PC-3 (cell line): ENCODE measurements at regions of chr5 and their contacts with region 1.

Region 1: GRCh38 chr5:23208959-23209431 is 298.4 kb upstream of the PRDM9 start:
- DNase-seq: peak; percentile 91
- ATAC-seq: peak; percentile 96
- H3K4me3 ChIP-seq: no peak overlapping the region
- H3K27ac ChIP-seq: no peak overlapping the region
- H3K4me1 ChIP-seq: no peaks in the 10 kb centered on the region
- H3K27me3 ChIP-seq: no peaks in the 10 kb centered on the region
- CTCF ChIP-seq: peak; percentile 91

Region 2: DNA sequence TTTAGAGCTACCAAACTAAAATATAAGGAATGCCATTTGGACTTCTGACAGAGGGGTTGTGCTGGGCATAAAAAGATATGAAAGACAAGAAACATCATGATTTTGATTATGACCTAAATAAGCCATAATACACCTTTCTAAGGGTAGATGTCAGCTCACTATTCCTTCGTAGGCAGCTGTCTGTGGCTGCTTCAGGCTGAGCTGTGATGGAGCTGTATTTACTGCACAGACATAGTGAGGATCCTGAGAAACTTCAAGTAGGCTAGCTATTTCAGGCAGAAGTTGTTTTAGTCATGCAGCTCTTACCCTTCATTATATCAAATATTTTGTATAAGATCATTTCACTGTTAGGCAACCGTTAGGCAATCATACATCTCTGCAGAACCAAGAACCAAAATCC is 867.6 kb before region 1 on chr5:
- CTCF ChIA-PET with region 1: no interaction called
- POLR2A ChIA-PET with region 1: no interaction called
- intact Hi-C with region 1: no loop called
- DNase-seq: no peak
- ATAC-seq: no peak
- H3K4me3 ChIP-seq: no peak overlapping the region
- H3K27ac ChIP-seq: no peak overlapping the region
- H3K4me1 ChIP-seq: no peaks in the 10 kb centered on the region
- H3K27me3 ChIP-seq: no peaks in the 10 kb centered on the region
- CTCF ChIP-seq: no peak

Region 3: GRCh38 chr5:22889718-22890117 is 319.3 kb before region 1 on chr5:
- CTCF ChIA-PET with region 1: no interaction called
- POLR2A ChIA-PET with region 1: no interaction called
- intact Hi-C with region 1: loop called (anchors 1 kb)
- DNase-seq: peak; percentile 36
- ATAC-seq: no peak
- H3K4me3 ChIP-seq: no peak overlapping the region
- H3K27ac ChIP-seq: no peak overlapping the region
- H3K4me1 ChIP-seq: no peaks in the 10 kb centered on the region
- H3K27me3 ChIP-seq: no peaks in the 10 kb centered on the region
- CTCF ChIP-seq: peak; percentile 61

Region 4: GRCh38 chr5:22928821-22929482 is 280.0 kb before region 1 on chr5:
- CTCF ChIA-PET with region 1: no interaction called
- POLR2A ChIA-PET with region 1: no interaction called
- intact Hi-C with region 1: no loop called
- DNase-seq: no peak
- ATAC-seq: no peak
- H3K4me3 ChIP-seq: no peak overlapping the region
- H3K27ac ChIP-seq: no peak overlapping the region
- H3K4me1 ChIP-seq: no peaks in the 10 kb centered on the region
- H3K27me3 ChIP-seq: no peaks in the 10 kb centered on the region
- CTCF ChIP-seq: no peak

Region 5: GRCh38 chr5:23332650-23333251 is 123.8 kb after region 1 on chr5:
- CTCF ChIA-PET with region 1: interaction called, 7 read pairs
- POLR2A ChIA-PET with region 1: no interaction called
- intact Hi-C with region 1: loop called (anchors 1 kb)
- DNase-seq: peak; percentile 72
- ATAC-seq: peak; percentile 64
- H3K4me3 ChIP-seq: no peak overlapping the region
- H3K27ac ChIP-seq: no peak overlapping the region
- H3K4me1 ChIP-seq: peaks cover 9% of the 10 kb centered on the region
- H3K27me3 ChIP-seq: no peaks in the 10 kb centered on the region
- CTCF ChIP-seq: peak; percentile 83

Region 6: GRCh38 chr5:23352437-23352836 is 143.4 kb after region 1 on chr5:
- CTCF ChIA-PET with region 1: no interaction called
- POLR2A ChIA-PET with region 1: no interaction called
- intact Hi-C with region 1: loop called (anchors 1 kb)
- DNase-seq: peak; percentile 81
- ATAC-seq: peak; percentile 93
- H3K4me3 ChIP-seq: no peak overlapping the region
- H3K27ac ChIP-seq: no peak overlapping the region
- H3K4me1 ChIP-seq: no peaks in the 10 kb centered on the region
- H3K27me3 ChIP-seq: no peaks in the 10 kb centered on the region
- CTCF ChIP-seq: peak; percentile 72

Region 7: GRCh38 chr5:23405316-23406068 is 196.5 kb after region 1 on chr5:
- CTCF ChIA-PET with region 1: interaction called, 4 read pairs
- POLR2A ChIA-PET with region 1: no interaction called
- intact Hi-C with region 1: loop called (anchors 1 kb)
- DNase-seq: peak; percentile 44
- ATAC-seq: no peak
- H3K4me3 ChIP-seq: no peak overlapping the region
- H3K27ac ChIP-seq: no peak overlapping the region
- H3K4me1 ChIP-seq: peaks cover 8% of the 10 kb centered on the region
- H3K27me3 ChIP-seq: no peaks in the 10 kb centered on the region
- CTCF ChIP-seq: peak; percentile 63

Region 8: GRCh38 chr5:23507278-23507685 is 298.3 kb after region 1 on chr5 and contains the start of gene PRDM9:
- CTCF ChIA-PET with region 1: no interaction called
- POLR2A ChIA-PET with region 1: no interaction called
- intact Hi-C with region 1: loop called (anchors 1 kb)
- DNase-seq: peak; percentile 98
- ATAC-seq: peak; percentile 93
- H3K4me3 ChIP-seq: peak within 1 kb of the TSS; percentile 70
- H3K27ac ChIP-seq: peak within 1 kb of the TSS; percentile 75
- H3K4me1 ChIP-seq: peaks cover 7% of the 10 kb centered on the region; the same call in 1 of the 2 replicates
- H3K27me3 ChIP-seq: no peaks in the 10 kb centered on the region
- CTCF ChIP-seq: no peak
- total RNA-seq, gene PRDM9: 0.11 and 0.12 TPM in 2 replicates

Region 9: DNA sequence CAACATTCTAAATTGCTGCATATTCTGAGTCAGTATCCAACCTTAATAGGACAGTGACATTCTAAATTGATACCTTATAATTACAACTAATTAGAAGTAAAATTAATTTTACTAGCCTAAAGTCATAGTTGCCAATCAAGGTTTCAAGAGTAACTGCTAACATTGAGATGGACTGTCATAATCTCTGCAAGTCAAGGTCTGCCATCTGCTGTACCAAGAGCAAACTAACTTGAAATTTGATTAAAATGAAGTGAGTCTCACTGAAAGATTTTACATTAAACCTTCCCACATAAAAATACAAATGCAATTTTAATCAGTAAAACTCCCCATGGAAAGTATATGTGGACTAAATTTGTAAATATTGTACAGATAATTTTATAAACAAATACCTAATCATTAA is 533.7 kb after region 1 on chr5:
- CTCF ChIA-PET with region 1: interaction called, 4 read pairs
- POLR2A ChIA-PET with region 1: no interaction called
- intact Hi-C with region 1: loop called (anchors 2 kb)
- DNase-seq: peak; percentile 19
- ATAC-seq: no peak
- H3K4me3 ChIP-seq: no peak overlapping the region
- H3K27ac ChIP-seq: no peak overlapping the region
- H3K4me1 ChIP-seq: peaks cover 7% of the 10 kb centered on the region; the same call in 1 of the 2 replicates
- H3K27me3 ChIP-seq: no peaks in the 10 kb centered on the region
- CTCF ChIP-seq: peak; percentile 55